Panc1 (cell line): ENCODE measurements at regions of chr10 and their contacts with region 1.

Region 1: DNA sequence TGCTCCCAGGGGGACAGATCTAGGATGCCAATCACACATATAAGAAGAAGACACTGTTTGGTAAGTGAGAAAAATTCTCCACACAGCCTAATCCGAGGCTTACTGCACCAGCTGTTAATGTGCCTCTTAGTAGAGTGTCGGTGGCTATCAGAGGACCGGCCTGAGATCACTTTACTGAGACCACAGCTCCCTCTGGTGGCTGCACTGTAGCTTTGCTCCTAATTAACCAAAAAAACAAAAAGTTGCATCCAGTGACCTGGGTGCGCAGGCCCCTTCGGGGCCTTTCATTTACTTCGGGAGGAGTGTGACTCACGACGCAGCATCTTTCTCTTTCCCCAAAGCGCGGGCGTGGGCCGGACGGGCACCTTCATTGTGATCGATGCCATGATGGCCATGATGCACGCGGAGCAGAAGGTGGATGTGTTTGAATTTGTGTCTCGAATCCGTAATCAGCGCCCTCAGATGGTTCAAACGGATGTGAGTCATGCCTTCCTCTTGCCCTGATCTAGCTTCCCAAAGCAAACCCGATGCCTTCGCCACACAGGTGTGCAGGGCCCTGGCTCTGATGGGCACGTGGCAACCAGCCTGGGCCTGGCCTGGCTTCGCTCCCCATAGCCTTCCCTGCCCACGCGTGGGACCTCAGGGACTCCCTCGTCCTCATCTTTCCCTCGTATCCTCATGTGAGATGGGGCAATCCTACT is 56.7 kb downstream of the MKI67 start:
- DNase-seq: peak; percentile 27
- ATAC-seq: peak; percentile 93
- H3K4me3 ChIP-seq: no peak overlapping the region
- H3K27ac ChIP-seq: no peak overlapping the region
- H3K4me1 ChIP-seq: peaks cover 4% of the 10 kb centered on the region; the same call in 1 of the 2 replicates
- H3K27me3 ChIP-seq: no peaks in the 10 kb centered on the region
- CTCF ChIP-seq: peak; percentile 91

Region 2: GRCh38 chr10:126551202-126551601 is 1518.3 kb before region 1 on chr10:
- CTCF ChIA-PET with region 1: interaction called, 10 read pairs
- POLR2A ChIA-PET with region 1: no interaction called
- in situ Hi-C with region 1: no loop called
- intact Hi-C with region 1: no loop called
- DNase-seq: no peak
- ATAC-seq: no peak
- H3K4me3 ChIP-seq: no peak overlapping the region
- H3K27ac ChIP-seq: no peak overlapping the region
- H3K4me1 ChIP-seq: no peaks in the 10 kb centered on the region
- H3K27me3 ChIP-seq: no peaks in the 10 kb centered on the region
- CTCF ChIP-seq: no peak

Region 3: GRCh38 chr10:127906548-127907377 is 162.7 kb before region 1 on chr10 and contains the start of gene PTPRE:
- CTCF ChIA-PET with region 1: interaction called, 8 read pairs
- POLR2A ChIA-PET with region 1: no interaction called
- in situ Hi-C with region 1: no loop called
- intact Hi-C with region 1: loop called (anchors 1 kb)
- DNase-seq: no peak
- ATAC-seq: peak; percentile 99
- H3K4me3 ChIP-seq: peak within 1 kb of the TSS; percentile 44 to 48
- H3K27ac ChIP-seq: no peak within 1 kb of the TSS
- H3K4me1 ChIP-seq: peaks cover 6% of the 10 kb centered on the region
- H3K27me3 ChIP-seq: peaks cover 9% of the 10 kb centered on the region
- CTCF ChIP-seq: peak; percentile 99
- total RNA-seq, gene PTPRE: 0.44 TPM

Region 4: GRCh38 chr10:128035557-128035973 is 33.9 kb before region 1 on chr10:
- CTCF ChIA-PET with region 1: interaction called, 16 read pairs
- POLR2A ChIA-PET with region 1: no interaction called
- in situ Hi-C with region 1: no loop called
- intact Hi-C with region 1: loop called (anchors 1 kb)
- DNase-seq: peak; percentile 30
- ATAC-seq: peak; percentile 84
- H3K4me3 ChIP-seq: no peak overlapping the region
- H3K27ac ChIP-seq: no peak overlapping the region
- H3K4me1 ChIP-seq: no peaks in the 10 kb centered on the region
- H3K27me3 ChIP-seq: no peaks in the 10 kb centered on the region
- CTCF ChIP-seq: peak; percentile 92